Caco-2 (cell line): ENCODE measurements at regions of chr6 and their contacts with region 1.

Region 1: GRCh38 chr6:31806465-31807272 is at the start of gene LSM2:
- DNase-seq: peak; percentile 96 to 98
- H3K4me3 ChIP-seq: peak within 1 kb of the TSS; percentile 68
- H3K4me3 Mint-ChIP-seq: peak within 1 kb of the TSS; percentile 92
- H3K27ac Mint-ChIP-seq: peak within 1 kb of the TSS; percentile 89
- H3K4me1 ChIP-seq: peaks cover 12% of the 10 kb centered on the region; the same call in 1 of the 2 replicates
- H3K4me1 Mint-ChIP-seq: peaks cover 12% of the 10 kb centered on the region
- H3K27me3 ChIP-seq: no peaks in the 10 kb centered on the region
- H3K27me3 Mint-ChIP-seq: no peaks in the 10 kb centered on the region
- CTCF ChIP-seq: peak; percentile 25 to 36
- total RNA-seq, gene LSM2: 56.3 and 61.2 TPM in 2 replicates

Region 2: DNA sequence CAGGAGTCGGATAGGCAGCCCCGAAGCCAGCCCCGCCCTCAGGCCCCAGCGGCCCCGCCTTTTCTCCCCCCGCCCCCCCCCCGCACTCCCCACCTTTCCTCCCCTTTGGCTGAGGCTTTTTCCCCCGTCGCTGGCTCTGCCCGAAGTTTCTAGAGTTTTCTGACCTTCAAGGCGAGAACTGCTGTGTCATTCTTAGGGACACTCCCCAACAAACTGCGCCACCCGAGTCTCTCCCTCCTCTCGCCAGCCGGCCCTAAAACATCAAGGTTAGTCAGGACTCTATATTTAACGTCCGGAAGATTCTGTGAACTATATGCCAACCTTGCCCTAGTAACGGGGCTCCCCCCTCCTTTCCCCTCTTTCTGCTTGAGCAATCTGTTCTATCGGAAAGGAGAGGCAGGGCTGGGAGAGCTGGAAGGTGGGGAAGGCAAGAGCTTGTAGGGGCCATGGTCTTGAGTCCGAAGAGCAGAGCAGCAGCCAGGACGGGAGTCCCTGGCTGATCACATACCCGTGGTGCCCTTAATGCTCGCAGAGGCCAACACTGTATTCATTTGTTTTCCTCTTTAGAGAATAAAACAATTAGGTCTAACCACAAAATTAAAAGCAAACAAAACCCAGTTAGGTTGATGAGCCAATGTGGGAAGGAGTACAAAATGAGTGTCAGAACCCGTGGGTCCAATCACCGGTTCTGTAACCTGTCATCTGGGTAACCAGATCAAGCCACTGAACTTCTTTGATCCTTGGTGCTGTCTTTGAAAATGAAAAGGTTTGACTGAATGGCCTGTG is 15.6 kb after region 1 on chr6:
- CTCF ChIA-PET with region 1: interaction called, 9 read pairs
- POLR2A ChIA-PET with region 1: interaction called, 29 read pairs
- intact Hi-C with region 1: loop called (anchors 1 kb)
- DNase-seq: peak; percentile 79 to 89
- H3K4me3 ChIP-seq: peak overlapping the region; percentile 45
- H3K4me3 Mint-ChIP-seq: peak overlapping the region; percentile 96
- H3K27ac Mint-ChIP-seq: peak overlapping the region; percentile 98
- H3K4me1 ChIP-seq: peaks cover 63% of the 10 kb centered on the region
- H3K4me1 Mint-ChIP-seq: peaks cover 17% of the 10 kb centered on the region
- H3K27me3 ChIP-seq: no peaks in the 10 kb centered on the region
- H3K27me3 Mint-ChIP-seq: no peaks in the 10 kb centered on the region
- CTCF ChIP-seq: no peak